ENCODE measurements at regions of chr1 and their contacts with region 1.

Region 1: GRCh38 chr1:226407497-226408284 is at the start of gene PARP1:
- DNase-seq: peak; percentile 93
- H3K4me3 Mint-ChIP-seq: peak within 1 kb of the TSS; percentile 100
- H3K27ac Mint-ChIP-seq: peak within 1 kb of the TSS; percentile 98
- H3K4me1 Mint-ChIP-seq: peaks cover 37% of the 10 kb centered on the region
- H3K27me3 Mint-ChIP-seq: no peaks in the 10 kb centered on the region
- total RNA-seq, gene PARP1: 301 to 308 TPM

Region 2: DNA sequence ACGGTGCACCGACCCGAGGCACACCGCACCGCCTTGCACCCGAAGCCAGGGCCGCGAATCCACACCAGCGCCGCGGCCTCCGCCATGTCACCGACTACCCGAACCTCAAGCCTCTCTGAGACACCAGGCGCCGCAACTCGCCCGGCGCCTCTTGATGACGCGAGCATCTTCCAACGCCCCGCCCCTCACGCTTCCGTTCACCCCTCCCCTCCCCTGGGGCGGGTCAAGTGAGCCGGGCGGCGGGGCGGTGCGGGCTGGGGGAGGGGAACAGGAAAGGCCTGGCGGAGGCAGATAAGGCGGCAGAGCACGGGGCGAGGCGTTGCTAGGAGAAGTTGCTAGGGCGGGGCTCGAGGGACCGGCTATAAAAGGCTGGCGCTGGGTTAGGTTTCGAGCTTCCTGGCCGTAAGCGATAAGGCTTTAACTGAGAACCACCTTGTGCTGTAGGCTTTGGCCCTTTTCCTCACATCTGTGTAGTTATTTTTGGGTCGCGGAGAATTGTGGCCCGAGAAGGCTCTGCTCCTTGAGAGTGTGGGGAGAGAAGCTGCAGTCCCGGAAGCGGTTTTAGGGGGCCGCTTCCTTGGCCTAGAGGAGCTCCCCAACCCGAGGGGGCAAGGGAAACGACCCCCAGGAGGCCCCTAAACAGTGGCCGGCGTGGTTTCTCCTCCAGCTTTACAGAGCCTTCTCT is 408.3 kb before region 1 on chr1 and contains the start of gene SDE2:
- CTCF ChIA-PET with region 1: interaction called, 4 read pairs
- POLR2A ChIA-PET with region 1: interaction called, 4 read pairs
- intact Hi-C with region 1: loop called (anchors 2 kb)
- DNase-seq: peak; percentile 100
- H3K4me3 Mint-ChIP-seq: peak within 1 kb of the TSS; percentile 100
- H3K27ac Mint-ChIP-seq: peak within 1 kb of the TSS; percentile 96
- H3K4me1 Mint-ChIP-seq: peaks cover 66% of the 10 kb centered on the region
- H3K27me3 Mint-ChIP-seq: no peaks in the 10 kb centered on the region
- total RNA-seq, gene SDE2: 18.0 to 18.2 TPM

Region 3: GRCh38 chr1:226308723-226309315 is 98.9 kb before region 1 on chr1 and contains the start of gene LIN9:
- CTCF ChIA-PET with region 1: interaction called, 8 read pairs
- POLR2A ChIA-PET with region 1: interaction called, 8 read pairs
- intact Hi-C with region 1: loop called (anchors 2 kb)
- DNase-seq: peak; percentile 95
- H3K4me3 Mint-ChIP-seq: peak within 1 kb of the TSS; percentile 89
- H3K27ac Mint-ChIP-seq: peak within 1 kb of the TSS; percentile 74
- H3K4me1 Mint-ChIP-seq: peaks cover 12% of the 10 kb centered on the region
- H3K27me3 Mint-ChIP-seq: peaks cover 8% of the 10 kb centered on the region
- total RNA-seq, gene LIN9: 9.5 to 9.6 TPM

Region 4: DNA sequence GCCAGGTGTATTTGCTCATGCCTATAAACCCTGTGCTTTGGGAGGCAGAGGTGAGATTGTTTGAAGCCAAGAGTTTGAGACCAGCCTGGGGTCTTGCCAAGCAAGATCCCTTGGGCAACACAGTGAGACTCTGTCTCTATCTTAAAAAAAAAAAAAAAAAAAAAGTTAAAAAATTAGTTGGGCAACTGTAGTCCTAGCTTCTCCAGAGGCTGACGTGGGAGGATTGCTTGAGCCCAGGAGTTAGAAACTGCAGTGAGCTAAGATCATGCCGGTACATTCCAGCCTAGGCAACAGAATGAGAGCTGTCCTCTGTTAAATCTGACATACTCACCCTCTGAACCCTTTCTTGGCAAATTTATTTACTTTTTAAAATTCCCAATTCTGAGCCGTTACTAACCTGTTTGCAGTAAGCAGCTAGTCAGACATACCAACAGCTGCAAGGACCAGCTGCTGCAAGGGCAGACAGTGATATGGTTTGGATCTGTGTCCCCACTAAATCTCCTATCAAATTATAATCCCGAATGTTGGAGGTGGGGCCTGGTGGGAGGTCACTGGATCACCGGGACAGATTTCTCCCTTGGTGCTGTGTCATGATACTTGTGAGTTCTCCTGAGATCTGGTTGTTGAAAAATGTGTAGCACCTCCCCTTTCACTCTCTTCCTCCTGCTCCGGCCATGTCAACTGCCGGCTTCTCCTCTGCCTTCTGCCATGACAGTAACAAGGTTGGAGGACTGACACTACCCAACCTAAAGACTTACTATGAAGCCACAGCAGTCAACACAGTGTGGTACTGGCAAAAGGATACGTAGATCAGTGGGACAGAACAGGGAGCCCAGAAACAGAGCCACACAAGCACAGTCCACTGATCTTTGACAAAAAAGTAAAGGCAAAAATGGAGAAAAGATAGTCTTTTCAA is 10.4 kb before region 1 on chr1:
- CTCF ChIA-PET with region 1: interaction called, 11 read pairs
- POLR2A ChIA-PET with region 1: interaction called, 3 read pairs
- intact Hi-C with region 1: no loop called
- DNase-seq: no peak
- H3K4me3 Mint-ChIP-seq: no peak overlapping the region
- H3K27ac Mint-ChIP-seq: no peak overlapping the region
- H3K4me1 Mint-ChIP-seq: peaks cover 41% of the 10 kb centered on the region
- H3K27me3 Mint-ChIP-seq: no peaks in the 10 kb centered on the region

Region 5: GRCh38 chr1:226444901-226445300 is 37.2 kb after region 1 on chr1:
- CTCF ChIA-PET with region 1: interaction called, 22 read pairs
- POLR2A ChIA-PET with region 1: interaction called, 13 read pairs
- intact Hi-C with region 1: no loop called
- DNase-seq: peak; percentile 81
- H3K4me3 Mint-ChIP-seq: no peak overlapping the region
- H3K27ac Mint-ChIP-seq: peak overlapping the region; percentile 6
- H3K4me1 Mint-ChIP-seq: peaks cover 32% of the 10 kb centered on the region
- H3K27me3 Mint-ChIP-seq: no peaks in the 10 kb centered on the region

Region 6: GRCh38 chr1:226602186-226603021 is 194.7 kb after region 1 on chr1:
- CTCF ChIA-PET with region 1: no interaction called
- POLR2A ChIA-PET with region 1: no interaction called
- intact Hi-C with region 1: no loop called
- DNase-seq: no peak
- H3K4me3 Mint-ChIP-seq: no peak overlapping the region
- H3K27ac Mint-ChIP-seq: no peak overlapping the region
- H3K4me1 Mint-ChIP-seq: peaks cover 4% of the 10 kb centered on the region
- H3K27me3 Mint-ChIP-seq: peaks cover 7% of the 10 kb centered on the region

Region 7: GRCh38 chr1:228102791-228103620 is 1695.3 kb after region 1 on chr1 and contains the start of gene C1orf35:
- CTCF ChIA-PET with region 1: no interaction called
- POLR2A ChIA-PET with region 1: no interaction called
- intact Hi-C with region 1: loop called (anchors 5 kb)
- DNase-seq: peak; percentile 96
- H3K4me3 Mint-ChIP-seq: peak within 1 kb of the TSS; percentile 91
- H3K27ac Mint-ChIP-seq: peak within 1 kb of the TSS; percentile 88
- H3K4me1 Mint-ChIP-seq: peaks cover 28% of the 10 kb centered on the region
- H3K27me3 Mint-ChIP-seq: no peaks in the 10 kb centered on the region
- total RNA-seq, gene C1orf35: 21.9 to 22.1 TPM